B cell (primary cell): ENCODE measurements at regions of chr11 and their contacts with region 1.

Region 1: GRCh38 chr11:96342961-96343711 is at the start of gene MAML2:
- DNase-seq: peak; percentile 93
- ATAC-seq: peak; percentile 86
- H3K4me3 ChIP-seq: peak within 1 kb of the TSS; percentile 82 to 100 (median 92)
- H3K4me3 Mint-ChIP-seq: peak within 1 kb of the TSS; percentile 99
- H3K27ac ChIP-seq: peak within 1 kb of the TSS; percentile 45 to 77
- H3K27ac Mint-ChIP-seq: peak within 1 kb of the TSS; percentile 95
- H3K4me1 ChIP-seq: peaks cover 38 to 43% of the 10 kb centered on the region in 2 donors
- H3K4me1 Mint-ChIP-seq: peaks cover 51% of the 10 kb centered on the region
- H3K27me3 ChIP-seq: no peaks in the 10 kb centered on the region
- H3K27me3 Mint-ChIP-seq: no peaks in the 10 kb centered on the region
- CTCF ChIP-seq: peak; percentile 94
- total RNA-seq, gene MAML2: 26.0 and 26.4 TPM in 2 replicates

Region 2: GRCh38 chr11:95790123-95790932 is 552.8 kb before region 1 on chr11 and contains the start of gene CEP57:
- CTCF ChIA-PET with region 1: interaction called, 6 read pairs
- POLR2A ChIA-PET with region 1: no interaction called
- intact Hi-C with region 1: loop called (anchors 5 kb)
- DNase-seq: peak; percentile 98
- ATAC-seq: peak; percentile 63
- H3K4me3 ChIP-seq: peak within 1 kb of the TSS; percentile 73 to 99 (median 96)
- H3K4me3 Mint-ChIP-seq: peak within 1 kb of the TSS; percentile 97
- H3K27ac ChIP-seq: peak within 1 kb of the TSS; percentile 98 to 100
- H3K27ac Mint-ChIP-seq: peak within 1 kb of the TSS; percentile 99
- H3K4me1 ChIP-seq: peaks cover 20% of the 10 kb centered on the region in 2 donors
- H3K4me1 Mint-ChIP-seq: peaks cover 51% of the 10 kb centered on the region
- H3K27me3 ChIP-seq: no peaks in the 10 kb centered on the region
- H3K27me3 Mint-ChIP-seq: no peaks in the 10 kb centered on the region
- CTCF ChIP-seq: no peak
- total RNA-seq, gene CEP57: 78.1 and 82.9 TPM in 2 replicates

Region 3: GRCh38 chr11:96054870-96055705 is 288.0 kb before region 1 on chr11:
- CTCF ChIA-PET with region 1: interaction called, 290 read pairs
- POLR2A ChIA-PET with region 1: interaction called, 6 read pairs
- intact Hi-C with region 1: loop called (anchors 1 kb)
- DNase-seq: peak; percentile 51
- ATAC-seq: peak; percentile 41
- H3K4me3 ChIP-seq: no peak overlapping the region
- H3K4me3 Mint-ChIP-seq: no peak overlapping the region
- H3K27ac ChIP-seq: no peak overlapping the region
- H3K27ac Mint-ChIP-seq: no peak overlapping the region
- H3K4me1 ChIP-seq: peaks cover 5 to 9% of the 10 kb centered on the region in 2 donors
- H3K4me1 Mint-ChIP-seq: peaks cover 20% of the 10 kb centered on the region
- H3K27me3 ChIP-seq: no peaks in the 10 kb centered on the region
- H3K27me3 Mint-ChIP-seq: no peaks in the 10 kb centered on the region
- CTCF ChIP-seq: peak; percentile 70

Region 4: DNA sequence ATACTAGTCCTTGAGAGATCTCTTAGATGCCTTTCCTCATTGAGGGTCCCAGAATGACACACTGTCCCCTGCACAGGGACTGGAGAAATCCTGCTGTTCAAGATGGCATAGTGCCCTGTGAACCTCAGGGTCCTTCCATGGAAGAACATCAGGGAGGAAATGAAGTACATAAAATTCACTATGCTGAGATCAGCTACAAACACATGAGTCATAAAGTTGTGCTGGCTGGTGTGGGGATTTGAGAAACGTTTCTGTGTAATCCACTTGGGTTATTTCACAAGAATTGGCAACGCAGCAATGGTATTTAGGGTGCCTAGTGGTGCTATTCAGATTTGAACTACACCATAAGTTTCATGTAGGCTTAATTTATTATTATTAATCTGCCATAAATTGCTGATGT is 174.5 kb before region 1 on chr11:
- CTCF ChIA-PET with region 1: interaction called, 12 read pairs
- POLR2A ChIA-PET with region 1: no interaction called
- intact Hi-C with region 1: no loop called
- DNase-seq: no peak
- ATAC-seq: no peak
- H3K4me3 ChIP-seq: no peak overlapping the region
- H3K4me3 Mint-ChIP-seq: no peak overlapping the region
- H3K27ac ChIP-seq: no peak overlapping the region
- H3K27ac Mint-ChIP-seq: no peak overlapping the region
- H3K4me1 ChIP-seq: peaks cover 6 to 9% of the 10 kb centered on the region in 2 donors
- H3K4me1 Mint-ChIP-seq: peaks cover 21% of the 10 kb centered on the region
- H3K27me3 ChIP-seq: no peaks in the 10 kb centered on the region
- H3K27me3 Mint-ChIP-seq: no peaks in the 10 kb centered on the region
- CTCF ChIP-seq: no peak

Region 5: GRCh38 chr11:96242971-96243647 is 100.0 kb before region 1 on chr11:
- CTCF ChIA-PET with region 1: interaction called, 148 read pairs
- POLR2A ChIA-PET with region 1: interaction called, 26 read pairs
- intact Hi-C with region 1: loop called (anchors 1 kb)
- DNase-seq: peak; percentile 82
- ATAC-seq: peak; percentile 81
- H3K4me3 ChIP-seq: peak overlapping the region; percentile 50 to 77 (median 62)
- H3K4me3 Mint-ChIP-seq: peak overlapping the region; percentile 93
- H3K27ac ChIP-seq: peak overlapping the region; percentile 72 to 84
- H3K27ac Mint-ChIP-seq: peak overlapping the region; percentile 96
- H3K4me1 ChIP-seq: peaks cover 36 to 37% of the 10 kb centered on the region in 2 donors
- H3K4me1 Mint-ChIP-seq: peaks cover 49% of the 10 kb centered on the region
- H3K27me3 ChIP-seq: no peaks in the 10 kb centered on the region
- H3K27me3 Mint-ChIP-seq: no peaks in the 10 kb centered on the region
- CTCF ChIP-seq: no peak

Region 6: DNA sequence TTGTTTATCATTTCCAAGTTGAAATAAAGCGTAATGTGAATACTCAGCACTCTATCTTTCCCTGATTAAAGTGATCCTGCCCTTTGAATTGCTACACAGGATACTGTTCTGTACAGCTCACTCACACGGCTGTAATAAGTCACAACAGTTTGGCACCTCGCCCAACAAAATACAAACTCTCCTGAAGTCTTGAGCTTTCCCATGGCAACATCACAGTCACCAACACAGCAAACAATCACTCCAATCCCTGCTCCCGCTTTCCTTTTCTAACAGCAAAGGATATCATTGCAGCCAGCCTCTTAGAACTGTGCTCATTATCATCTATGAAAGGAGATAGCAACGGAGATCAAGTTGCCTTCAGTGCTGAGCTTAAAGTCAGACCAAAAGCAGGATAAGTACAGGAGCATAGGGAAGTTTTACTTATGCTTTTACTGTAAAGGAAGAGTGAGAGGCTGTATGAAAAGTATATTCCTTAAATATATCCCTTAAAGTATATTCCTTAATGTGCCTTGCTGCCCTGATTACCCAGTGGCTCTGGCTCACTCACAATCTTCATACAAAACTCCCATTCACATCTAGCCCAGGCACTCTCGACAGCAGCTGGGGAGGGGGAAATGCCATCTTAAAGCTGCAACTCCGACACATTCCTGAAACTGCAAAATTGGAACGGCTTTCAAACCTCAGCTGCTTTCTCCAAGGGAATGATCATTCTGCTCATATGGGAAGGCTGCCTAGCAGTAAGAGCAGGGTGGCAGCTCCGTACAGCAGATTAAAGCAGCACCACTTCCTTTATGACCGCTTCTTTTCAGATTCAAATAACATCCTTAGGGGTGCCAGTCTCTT is 36.0 kb before region 1 on chr11:
- CTCF ChIA-PET with region 1: interaction called, 40 read pairs
- POLR2A ChIA-PET with region 1: no interaction called
- intact Hi-C with region 1: no loop called
- DNase-seq: no peak
- ATAC-seq: no peak
- H3K4me3 ChIP-seq: no peak overlapping the region
- H3K4me3 Mint-ChIP-seq: peak overlapping the region; percentile 40
- H3K27ac ChIP-seq: no peak overlapping the region
- H3K27ac Mint-ChIP-seq: no peak overlapping the region
- H3K4me1 ChIP-seq: no peaks in the 10 kb centered on the region
- H3K4me1 Mint-ChIP-seq: peaks cover 41% of the 10 kb centered on the region
- H3K27me3 ChIP-seq: no peaks in the 10 kb centered on the region
- H3K27me3 Mint-ChIP-seq: no peaks in the 10 kb centered on the region
- CTCF ChIP-seq: no peak

Region 7: GRCh38 chr11:96447208-96448110 is 104.3 kb after region 1 on chr11:
- CTCF ChIA-PET with region 1: no interaction called
- POLR2A ChIA-PET with region 1: no interaction called
- intact Hi-C with region 1: no loop called
- DNase-seq: no peak
- ATAC-seq: no peak
- H3K4me3 ChIP-seq: no peak overlapping the region
- H3K4me3 Mint-ChIP-seq: no peak overlapping the region
- H3K27ac ChIP-seq: no peak overlapping the region
- H3K27ac Mint-ChIP-seq: no peak overlapping the region
- H3K4me1 ChIP-seq: no peaks in the 10 kb centered on the region
- H3K4me1 Mint-ChIP-seq: no peaks in the 10 kb centered on the region
- H3K27me3 ChIP-seq: peaks cover 0 to 14% (median 4%) of the 10 kb centered on the region in 4 experiments
- H3K27me3 Mint-ChIP-seq: peaks cover 24% of the 10 kb centered on the region
- CTCF ChIP-seq: no peak